BJ (cell line): ENCODE measurements at regions of chr6 and their contacts with region 1.

Region 1: DNA sequence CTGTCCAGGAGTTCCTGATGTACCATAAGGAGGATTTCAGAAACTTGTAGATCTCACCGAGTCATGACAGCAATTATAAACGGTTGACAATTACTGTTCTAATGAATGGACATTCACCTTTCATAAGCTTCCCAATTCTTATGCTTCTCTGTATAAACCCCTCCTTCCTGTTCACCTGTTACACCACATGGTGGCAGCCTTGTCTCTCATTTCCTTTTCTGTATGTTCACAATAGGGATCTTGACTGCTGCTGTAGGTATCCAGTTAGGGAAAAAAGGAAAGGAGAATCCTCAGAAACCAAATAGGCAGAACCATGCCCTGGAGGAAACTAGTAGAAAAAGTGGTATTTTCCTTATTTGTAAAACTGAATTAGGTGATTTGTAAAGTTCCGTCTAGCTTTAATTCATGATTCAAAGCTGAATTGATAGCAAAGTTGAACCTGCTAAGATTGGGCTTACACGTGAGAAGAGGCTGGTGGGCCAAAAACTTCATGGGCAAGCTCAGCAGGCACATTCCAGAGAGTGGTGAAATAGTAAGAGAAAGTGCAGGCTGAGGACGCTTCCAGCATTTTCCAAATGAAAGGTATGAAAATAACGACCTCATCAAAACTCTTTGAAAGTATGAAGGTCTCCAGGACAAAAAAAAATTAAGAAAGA is 29.0 kb upstream of the TBPL1 start:
- DNase-seq: peak; percentile 27
- H3K4me3 ChIP-seq: no peak overlapping the region
- H3K27me3 ChIP-seq: no peaks in the 10 kb centered on the region
- CTCF ChIP-seq: peak; percentile 77

Region 2: GRCh38 chr6:133487174-133487573 is 436.9 kb before region 1 on chr6:
- CTCF ChIA-PET with region 1: no interaction called
- POLR2A ChIA-PET with region 1: no interaction called
- DNase-seq: no peak
- H3K4me3 ChIP-seq: no peak overlapping the region
- H3K27me3 ChIP-seq: no peaks in the 10 kb centered on the region
- CTCF ChIP-seq: no peak

Region 3: GRCh38 chr6:133568970-133569889 is 354.8 kb before region 1 on chr6:
- CTCF ChIA-PET with region 1: interaction called, 138 read pairs
- POLR2A ChIA-PET with region 1: no interaction called
- DNase-seq: peak; percentile 28
- H3K4me3 ChIP-seq: peak overlapping the region; percentile 29
- H3K27me3 ChIP-seq: no peaks in the 10 kb centered on the region
- CTCF ChIP-seq: peak; percentile 97

Region 4: DNA sequence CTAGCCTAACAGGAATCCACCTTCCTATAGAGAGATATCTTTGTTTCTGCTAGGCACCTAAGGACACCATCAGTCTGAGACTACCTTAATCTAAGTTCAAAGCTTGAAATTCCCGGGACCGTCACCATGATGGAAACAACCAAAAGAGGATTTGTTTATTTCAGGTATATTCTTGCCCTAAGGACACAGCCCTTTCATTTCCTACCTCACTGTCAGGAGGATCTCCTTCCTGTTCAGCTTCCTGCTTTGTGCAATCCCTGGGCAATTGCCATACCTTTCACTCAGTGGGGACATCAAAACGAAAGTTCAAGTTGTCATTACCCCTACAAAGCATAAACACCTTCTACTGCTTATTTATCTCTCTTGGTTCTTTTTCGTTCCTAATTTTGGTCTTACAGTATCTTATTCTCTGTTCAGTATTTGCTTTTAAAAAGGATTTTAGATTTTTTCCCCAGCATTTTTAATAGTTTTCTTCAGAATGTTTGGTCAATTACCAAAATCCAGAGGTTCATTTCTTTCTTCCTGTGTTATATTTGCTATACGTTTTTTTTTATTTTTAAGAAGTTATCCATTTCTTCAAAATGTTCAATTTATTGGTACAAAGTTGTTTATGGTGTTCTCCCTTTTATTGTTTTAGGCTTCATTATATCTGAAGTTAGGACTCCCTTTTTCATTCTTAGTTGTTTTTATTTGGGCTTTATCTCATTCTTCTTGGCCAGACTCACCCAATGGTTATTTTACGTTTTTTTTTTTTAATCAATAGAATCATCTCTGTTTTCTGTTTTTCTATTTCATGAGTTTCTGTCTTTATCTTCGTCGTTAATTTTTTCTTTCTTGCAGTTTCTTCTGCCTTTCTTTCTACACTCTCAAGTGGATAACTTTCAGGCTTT is 16.0 kb after region 1 on chr6:
- CTCF ChIA-PET with region 1: interaction called, 17 read pairs
- POLR2A ChIA-PET with region 1: interaction called, 4 read pairs
- DNase-seq: no peak
- H3K4me3 ChIP-seq: no peak overlapping the region
- H3K27me3 ChIP-seq: no peaks in the 10 kb centered on the region
- CTCF ChIP-seq: no peak

Region 5: GRCh38 chr6:133952815-133953633 is 29.0 kb after region 1 on chr6 and contains the start of gene TBPL1:
- CTCF ChIA-PET with region 1: interaction called, 14 read pairs
- POLR2A ChIA-PET with region 1: no interaction called
- DNase-seq: peak; percentile 70
- H3K4me3 ChIP-seq: peak within 1 kb of the TSS; percentile 92
- H3K27me3 ChIP-seq: no peaks in the 10 kb centered on the region
- CTCF ChIP-seq: no peak
- polyA plus RNA-seq, gene TBPL1: 36.2 and 37.0 TPM in 2 replicates

Region 6: GRCh38 chr6:134063966-134064445 is 139.9 kb after region 1 on chr6:
- CTCF ChIA-PET with region 1: interaction called, 105 read pairs
- POLR2A ChIA-PET with region 1: no interaction called
- DNase-seq: no peak
- H3K4me3 ChIP-seq: no peak overlapping the region
- H3K27me3 ChIP-seq: no peaks in the 10 kb centered on the region
- CTCF ChIP-seq: peak; percentile 94

Region 7: GRCh38 chr6:134097114-134097707 is 173.1 kb after region 1 on chr6:
- CTCF ChIA-PET with region 1: interaction called, 337 read pairs
- POLR2A ChIA-PET with region 1: no interaction called
- DNase-seq: no peak
- H3K4me3 ChIP-seq: no peak overlapping the region
- H3K27me3 ChIP-seq: peaks cover 6% of the 10 kb centered on the region
- CTCF ChIP-seq: peak; percentile 54